ENCODE measurements at regions of chr15 and their contacts with region 1.

Region 1: GRCh38 chr15:65028921-65029735 is at the start of gene MTFMT:
- DNase-seq: peak; percentile 88 to 96 (median 93)
- ATAC-seq: peak; percentile 96
- H3K4me3 ChIP-seq: peak within 1 kb of the TSS; percentile 69 to 82
- H3K4me3 Mint-ChIP-seq: peak within 1 kb of the TSS; percentile 86
- H3K27ac ChIP-seq: peak within 1 kb of the TSS; percentile 53 to 61
- H3K27ac Mint-ChIP-seq: peak within 1 kb of the TSS; percentile 68
- H3K4me1 ChIP-seq: peaks cover 14% of the 10 kb centered on the region
- H3K4me1 Mint-ChIP-seq: peaks cover 24% of the 10 kb centered on the region
- H3K27me3 ChIP-seq: no peaks in the 10 kb centered on the region
- H3K27me3 Mint-ChIP-seq: peaks cover 14% of the 10 kb centered on the region
- CTCF ChIP-seq: no peak
- total RNA-seq, gene MTFMT: 6.9 to 7.4 TPM

Region 2: DNA sequence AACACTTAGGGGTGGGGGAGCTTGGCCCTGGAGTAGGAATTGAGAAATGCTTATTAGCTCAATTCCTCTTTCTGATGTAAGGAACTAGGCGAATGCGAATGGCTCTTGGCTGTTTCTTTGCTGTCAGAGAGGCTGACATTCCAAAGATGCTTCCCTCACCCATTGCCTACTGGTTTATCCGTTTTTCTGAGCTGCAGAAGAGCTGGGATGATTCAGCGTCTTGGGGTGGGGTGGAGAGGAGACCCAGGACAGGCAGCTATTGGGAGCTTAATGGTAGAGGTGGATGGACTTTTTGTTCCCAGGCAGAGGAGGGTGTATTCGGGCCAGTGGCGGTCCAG is 177.7 kb before region 1 on chr15:
- CTCF ChIA-PET with region 1: no interaction called
- POLR2A ChIA-PET with region 1: no interaction called
- intact Hi-C with region 1: no loop called
- DNase-seq: no peak
- ATAC-seq: no peak
- H3K4me3 ChIP-seq: no peak overlapping the region
- H3K4me3 Mint-ChIP-seq: no peak overlapping the region
- H3K27ac ChIP-seq: no peak overlapping the region
- H3K27ac Mint-ChIP-seq: no peak overlapping the region
- H3K4me1 ChIP-seq: peaks cover 16% of the 10 kb centered on the region
- H3K4me1 Mint-ChIP-seq: peaks cover 52% of the 10 kb centered on the region
- H3K27me3 ChIP-seq: no peaks in the 10 kb centered on the region
- H3K27me3 Mint-ChIP-seq: no peaks in the 10 kb centered on the region
- CTCF ChIP-seq: no peak

Region 3: GRCh38 chr15:64961013-64961412 is 68.1 kb before region 1 on chr15:
- CTCF ChIA-PET with region 1: no interaction called
- POLR2A ChIA-PET with region 1: no interaction called
- intact Hi-C with region 1: loop called in 1 of 2 experiments (anchors 2 kb)
- DNase-seq: no peak
- ATAC-seq: no peak
- H3K4me3 ChIP-seq: no peak overlapping the region
- H3K4me3 Mint-ChIP-seq: no peak overlapping the region
- H3K27ac ChIP-seq: no peak overlapping the region
- H3K27ac Mint-ChIP-seq: no peak overlapping the region
- H3K4me1 ChIP-seq: no peaks in the 10 kb centered on the region
- H3K4me1 Mint-ChIP-seq: no peaks in the 10 kb centered on the region
- H3K27me3 ChIP-seq: no peaks in the 10 kb centered on the region
- H3K27me3 Mint-ChIP-seq: no peaks in the 10 kb centered on the region
- CTCF ChIP-seq: no peak

Region 4: GRCh38 chr15:65049418-65049840 is 20.3 kb after region 1 on chr15:
- CTCF ChIA-PET with region 1: interaction called, 4 read pairs
- POLR2A ChIA-PET with region 1: no interaction called
- intact Hi-C with region 1: loop called in 1 of 2 experiments (anchors 1 kb)
- DNase-seq: peak; percentile 63 to 95 (median 81)
- ATAC-seq: peak; percentile 98
- H3K4me3 ChIP-seq: peak overlapping the region; percentile 25 to 44
- H3K4me3 Mint-ChIP-seq: peak overlapping the region; percentile 64
- H3K27ac ChIP-seq: no peak overlapping the region
- H3K27ac Mint-ChIP-seq: no peak overlapping the region
- H3K4me1 ChIP-seq: peaks cover 13% of the 10 kb centered on the region
- H3K4me1 Mint-ChIP-seq: peaks cover 14% of the 10 kb centered on the region
- H3K27me3 ChIP-seq: no peaks in the 10 kb centered on the region
- H3K27me3 Mint-ChIP-seq: peaks cover 4% of the 10 kb centered on the region
- CTCF ChIP-seq: no peak

Region 5: GRCh38 chr15:65086017-65086679 is 57.0 kb after region 1 on chr15:
- CTCF ChIA-PET with region 1: interaction called, 11 read pairs
- POLR2A ChIA-PET with region 1: no interaction called
- intact Hi-C with region 1: no loop called
- DNase-seq: no peak
- ATAC-seq: no peak
- H3K4me3 ChIP-seq: no peak overlapping the region
- H3K4me3 Mint-ChIP-seq: no peak overlapping the region
- H3K27ac ChIP-seq: no peak overlapping the region
- H3K27ac Mint-ChIP-seq: no peak overlapping the region
- H3K4me1 ChIP-seq: peaks cover 14% of the 10 kb centered on the region
- H3K4me1 Mint-ChIP-seq: peaks cover 12% of the 10 kb centered on the region
- H3K27me3 ChIP-seq: no peaks in the 10 kb centered on the region
- H3K27me3 Mint-ChIP-seq: peaks cover 11% of the 10 kb centered on the region
- CTCF ChIP-seq: no peak

Region 6: GRCh38 chr15:65298731-65299130 is 269.6 kb after region 1 on chr15:
- CTCF ChIA-PET with region 1: interaction called, 4 read pairs
- POLR2A ChIA-PET with region 1: no interaction called
- intact Hi-C with region 1: loop called (anchors 1 to 5 kb)
- DNase-seq: no peak
- ATAC-seq: no peak
- H3K4me3 ChIP-seq: peak overlapping the region in 1 of 2 experiments; percentile 6
- H3K4me3 Mint-ChIP-seq: peak overlapping the region; percentile 88
- H3K27ac ChIP-seq: peak overlapping the region in 1 of 2 experiments; percentile 41
- H3K27ac Mint-ChIP-seq: peak overlapping the region; percentile 84
- H3K4me1 ChIP-seq: peaks cover 36% of the 10 kb centered on the region
- H3K4me1 Mint-ChIP-seq: peaks cover 45% of the 10 kb centered on the region
- H3K27me3 ChIP-seq: no peaks in the 10 kb centered on the region
- H3K27me3 Mint-ChIP-seq: no peaks in the 10 kb centered on the region
- CTCF ChIP-seq: no peak

Measured in CD8-positive, alpha-beta T cell (primary cell).